ENCODE measurements at regions of chr1 and their contacts with region 1.

Region 1: DNA sequence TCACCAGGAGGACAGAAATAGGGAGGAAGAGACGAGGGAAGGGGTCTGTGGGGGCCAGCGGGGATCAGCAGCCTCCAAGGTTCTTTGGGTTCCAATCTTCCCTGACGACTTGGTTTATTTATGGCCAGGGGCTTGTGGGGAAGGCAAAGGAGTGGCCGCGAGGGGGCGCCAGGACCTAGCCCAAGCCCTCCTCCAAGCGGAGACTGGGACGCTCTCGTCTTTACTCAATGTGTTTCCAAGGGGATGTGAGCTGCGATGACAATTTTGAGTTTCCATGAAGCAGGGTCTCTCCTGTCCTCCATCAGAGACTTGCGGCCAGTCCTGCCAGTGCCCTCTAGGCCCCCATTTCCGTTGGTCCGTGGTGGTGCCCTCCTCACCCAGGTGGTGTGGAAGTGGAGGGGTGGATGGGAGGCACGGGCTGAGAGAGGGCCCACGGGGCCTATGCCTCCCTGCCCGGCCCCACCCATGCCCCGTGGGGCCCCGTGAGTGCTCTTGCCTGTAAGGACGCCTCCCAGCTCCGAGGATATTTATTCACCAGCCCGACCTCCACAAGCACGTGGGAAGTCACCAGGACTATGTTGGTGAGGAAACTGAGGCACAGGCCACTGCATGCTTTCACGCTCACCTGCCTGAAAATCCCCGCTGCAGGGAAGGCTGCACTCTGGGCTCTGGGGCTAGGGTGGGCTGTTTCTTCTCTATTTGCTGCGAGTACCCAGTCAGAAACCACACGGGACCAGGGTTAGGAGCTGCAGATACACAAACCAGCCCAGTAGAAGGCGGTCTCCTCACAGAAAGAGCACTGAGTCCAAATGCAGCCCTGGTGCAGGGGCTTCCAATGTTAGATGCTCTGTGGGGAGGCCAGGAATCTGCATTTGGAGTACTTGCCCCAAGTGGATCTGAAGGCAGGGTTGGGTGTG is 26.5 kb downstream of the DMRTB1 start:
- DNase-seq: peak; percentile 68 to 79
- ATAC-seq: peak; percentile 62 to 89 (median 72)
- H3K4me3 ChIP-seq: no peak overlapping the region
- H3K4me3 Mint-ChIP-seq: no peak overlapping the region
- H3K27ac ChIP-seq: no peak overlapping the region
- H3K27ac Mint-ChIP-seq: no peak overlapping the region
- H3K4me1 ChIP-seq: peaks cover 6% of the 10 kb centered on the region
- H3K4me1 Mint-ChIP-seq: peaks cover 0 to 7% of the 10 kb centered on the region in 2 donors
- H3K27me3 ChIP-seq: peaks cover 7% of the 10 kb centered on the region
- H3K27me3 Mint-ChIP-seq: peaks cover 25 to 45% of the 10 kb centered on the region in 2 donors
- CTCF ChIP-seq: peak; percentile 80

Region 2: GRCh38 chr1:53592521-53592982 is 106.8 kb after region 1 on chr1:
- intact Hi-C with region 1: loop called (anchors 5 kb)
- DNase-seq: no peak
- ATAC-seq: peak in 1 of 3 donors; percentile 10
- H3K4me3 ChIP-seq: no peak overlapping the region
- H3K4me3 Mint-ChIP-seq: no peak overlapping the region
- H3K27ac ChIP-seq: no peak overlapping the region
- H3K27ac Mint-ChIP-seq: no peak overlapping the region
- H3K4me1 ChIP-seq: no peaks in the 10 kb centered on the region
- H3K4me1 Mint-ChIP-seq: peaks cover 0 to 5% of the 10 kb centered on the region in 2 donors
- H3K27me3 ChIP-seq: no peaks in the 10 kb centered on the region
- H3K27me3 Mint-ChIP-seq: peaks cover 27 to 31% of the 10 kb centered on the region in 2 donors
- CTCF ChIP-seq: no peak

Region 3: DNA sequence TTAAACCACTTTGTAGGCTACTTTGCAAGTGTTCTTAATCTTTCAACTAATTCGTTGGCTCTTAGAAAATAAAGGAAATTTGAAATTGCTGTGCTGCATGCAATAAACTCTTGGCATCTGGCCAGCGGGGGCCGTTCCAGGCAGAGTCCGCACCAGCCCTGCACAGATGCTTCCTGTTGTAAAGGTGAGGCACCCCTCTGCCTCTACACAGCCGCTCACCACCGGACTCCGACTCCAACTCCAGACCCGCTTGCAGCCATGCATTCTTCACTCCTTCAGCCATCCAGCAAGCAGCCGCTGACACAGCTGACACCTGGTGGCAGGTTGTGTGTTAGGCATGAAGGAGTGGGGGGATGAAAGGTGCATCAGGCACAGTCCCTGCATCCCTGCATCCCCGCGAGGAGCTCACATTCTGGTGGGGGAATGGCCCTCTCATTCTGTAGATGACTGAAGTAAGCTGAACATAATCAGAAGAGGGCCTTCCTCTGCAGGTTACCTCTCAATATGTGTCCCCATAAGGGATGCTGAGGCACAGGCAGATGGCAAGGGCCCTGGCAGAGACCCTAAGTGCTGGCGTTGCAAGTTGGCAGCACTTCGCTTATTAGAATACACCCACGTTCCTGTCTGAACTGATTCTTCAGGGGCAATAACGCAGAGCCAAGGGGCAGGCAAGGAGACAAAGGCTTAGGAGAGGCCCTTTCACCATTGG is 196.4 kb after region 1 on chr1:
- intact Hi-C with region 1: loop called (anchors 1 kb)
- DNase-seq: peak; percentile 22 to 63
- ATAC-seq: peak; percentile 24 to 67 (median 53)
- H3K4me3 ChIP-seq: no peak overlapping the region
- H3K4me3 Mint-ChIP-seq: no peak overlapping the region
- H3K27ac ChIP-seq: no peak overlapping the region
- H3K27ac Mint-ChIP-seq: no peak overlapping the region
- H3K4me1 ChIP-seq: peaks cover 3% of the 10 kb centered on the region
- H3K4me1 Mint-ChIP-seq: peaks cover 5 to 7% of the 10 kb centered on the region in 2 donors
- H3K27me3 ChIP-seq: no peaks in the 10 kb centered on the region
- H3K27me3 Mint-ChIP-seq: peaks cover 27 to 48% of the 10 kb centered on the region in 2 donors
- CTCF ChIP-seq: peak; percentile 26

Region 4: DNA sequence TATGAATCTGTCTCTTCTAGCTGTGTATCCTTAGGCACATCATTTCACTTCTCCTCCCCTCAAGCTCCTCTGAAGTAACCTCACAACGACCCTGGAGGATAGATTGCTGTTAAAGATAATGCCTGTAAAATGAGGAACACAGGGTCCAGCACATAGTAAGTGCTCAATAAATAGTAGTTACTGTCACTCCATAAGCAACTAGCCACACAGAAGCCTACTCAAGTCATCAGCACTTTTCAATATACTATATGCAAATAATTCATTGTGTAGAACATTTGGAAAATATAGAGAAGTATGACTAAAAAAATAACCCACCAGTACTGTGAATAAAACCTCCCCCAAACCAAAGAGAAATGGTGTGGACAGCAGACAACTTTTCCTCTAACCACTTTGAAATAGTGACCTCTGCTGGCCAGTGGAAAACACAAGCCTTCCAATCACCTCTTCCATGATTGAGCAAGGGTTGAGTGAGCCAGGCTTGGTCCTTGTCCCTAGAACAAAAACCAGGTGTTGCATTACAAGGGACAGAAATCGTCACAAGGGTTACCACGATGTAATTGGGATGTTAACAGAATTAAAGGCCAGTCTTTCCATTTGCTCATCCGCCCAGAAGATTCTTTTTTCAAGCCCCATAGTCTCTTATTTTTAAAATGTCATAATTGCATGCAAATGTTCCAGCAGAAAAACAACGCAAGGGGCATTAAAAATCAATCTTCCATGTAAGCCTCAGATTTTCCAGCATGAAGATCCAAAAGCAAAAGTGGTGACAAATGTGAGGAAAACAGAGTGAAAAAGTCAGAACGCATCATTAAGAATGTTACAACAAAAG is 269.0 kb after region 1 on chr1:
- intact Hi-C with region 1: loop called (anchors 1 kb)
- DNase-seq: peak in 1 of 2 donors; percentile 58
- ATAC-seq: peak in 1 of 3 donors; percentile 65
- H3K4me3 ChIP-seq: no peak overlapping the region
- H3K4me3 Mint-ChIP-seq: no peak overlapping the region
- H3K27ac ChIP-seq: no peak overlapping the region
- H3K27ac Mint-ChIP-seq: no peak overlapping the region
- H3K4me1 ChIP-seq: no peaks in the 10 kb centered on the region
- H3K4me1 Mint-ChIP-seq: no peaks in the 10 kb centered on the region
- H3K27me3 ChIP-seq: no peaks in the 10 kb centered on the region
- H3K27me3 Mint-ChIP-seq: no peaks in the 10 kb centered on the region
- CTCF ChIP-seq: peak; percentile 70

Measured in natural killer cell (primary cell).